GM12878 (cell line): ENCODE measurements at regions of chr3 and their contacts with region 1.

Region 1: GRCh38 chr3:149717391-149718056 is 34.8 kb downstream of the COMMD2 start:
- DNase-seq: no peak
- ATAC-seq: peak; percentile 87
- H3K4me3 ChIP-seq: no peak overlapping the region
- H3K27ac ChIP-seq: no peak overlapping the region
- H3K4me1 ChIP-seq: no peaks in the 10 kb centered on the region
- H3K27me3 ChIP-seq: no peaks in the 10 kb centered on the region
- CTCF ChIP-seq: peak; percentile 64 to 70 (median 66)
- EP300 ChIP-seq: no peak
- POLR2A ChIP-seq: no peak
- RAD21 ChIP-seq: peak; percentile 78

Region 2: GRCh38 chr3:149536429-149536828 is 181.1 kb before region 1 on chr3:
- CTCF ChIA-PET with region 1: interaction called, 150 read pairs
- POLR2A ChIA-PET with region 1: no interaction called
- RAD21 ChIA-PET with region 1: interaction called, 44 read pairs
- SMC1A ChIA-PET with region 1: interaction called, 67 read pairs
- in situ Hi-C with region 1: no loop called
- intact Hi-C with region 1: loop called (anchors 1 kb)
- DNase-seq: no peak
- ATAC-seq: no peak
- H3K4me3 ChIP-seq: no peak overlapping the region
- H3K27ac ChIP-seq: no peak overlapping the region
- H3K4me1 ChIP-seq: peaks cover 12% of the 10 kb centered on the region
- H3K27me3 ChIP-seq: no peaks in the 10 kb centered on the region
- CTCF ChIP-seq: no peak
- EP300 ChIP-seq: no peak
- POLR2A ChIP-seq: no peak
- RAD21 ChIP-seq: no peak

Region 3: GRCh38 chr3:149581681-149582370 is 135.7 kb before region 1 on chr3:
- CTCF ChIA-PET with region 1: interaction called, 22 read pairs
- POLR2A ChIA-PET with region 1: no interaction called
- RAD21 ChIA-PET with region 1: interaction called, 9 read pairs
- SMC1A ChIA-PET with region 1: interaction called, 33 read pairs
- in situ Hi-C with region 1: no loop called
- intact Hi-C with region 1: no loop called
- DNase-seq: no peak
- ATAC-seq: peak; percentile 57
- H3K4me3 ChIP-seq: peak overlapping the region; percentile 52; the same call in 1 of the 2 replicates
- H3K27ac ChIP-seq: peak overlapping the region; percentile 63
- H3K4me1 ChIP-seq: peaks cover 73% of the 10 kb centered on the region
- H3K27me3 ChIP-seq: no peaks in the 10 kb centered on the region
- CTCF ChIP-seq: no peak
- EP300 ChIP-seq: 0 out of 4 replicates have a peak, but pooled peaks of 1 of the 2 experiments have one; percentile 21
- POLR2A ChIP-seq: no peak
- RAD21 ChIP-seq: no peak

Region 4: GRCh38 chr3:149657926-149658733 is 59.4 kb before region 1 on chr3 and contains the start of gene WWTR1:
- CTCF ChIA-PET with region 1: interaction called, 39 read pairs
- POLR2A ChIA-PET with region 1: interaction called, 7 read pairs
- RAD21 ChIA-PET with region 1: interaction called, 18 read pairs
- SMC1A ChIA-PET with region 1: interaction called, 30 read pairs
- in situ Hi-C with region 1: no loop called
- intact Hi-C with region 1: loop called (anchors 2 kb)
- DNase-seq: peak; percentile 54
- ATAC-seq: peak; percentile 85
- H3K4me3 ChIP-seq: peak within 1 kb of the TSS; percentile 87
- H3K27ac ChIP-seq: peak within 1 kb of the TSS; percentile 97
- H3K4me1 ChIP-seq: peaks cover 10% of the 10 kb centered on the region
- H3K27me3 ChIP-seq: no peaks in the 10 kb centered on the region
- CTCF ChIP-seq: peak; percentile 23 to 52 (median 43); a peak in 5 of 6 replicates
- EP300 ChIP-seq: 0 out of 4 replicates have a peak, but pooled peaks of 1 of the 2 experiments have one; percentile 18
- POLR2A ChIP-seq: peak; percentile 77
- RAD21 ChIP-seq: peak; percentile 54
- polyA plus RNA-seq, gene WWTR1: 3.8 to 4.0 TPM

Region 5: DNA sequence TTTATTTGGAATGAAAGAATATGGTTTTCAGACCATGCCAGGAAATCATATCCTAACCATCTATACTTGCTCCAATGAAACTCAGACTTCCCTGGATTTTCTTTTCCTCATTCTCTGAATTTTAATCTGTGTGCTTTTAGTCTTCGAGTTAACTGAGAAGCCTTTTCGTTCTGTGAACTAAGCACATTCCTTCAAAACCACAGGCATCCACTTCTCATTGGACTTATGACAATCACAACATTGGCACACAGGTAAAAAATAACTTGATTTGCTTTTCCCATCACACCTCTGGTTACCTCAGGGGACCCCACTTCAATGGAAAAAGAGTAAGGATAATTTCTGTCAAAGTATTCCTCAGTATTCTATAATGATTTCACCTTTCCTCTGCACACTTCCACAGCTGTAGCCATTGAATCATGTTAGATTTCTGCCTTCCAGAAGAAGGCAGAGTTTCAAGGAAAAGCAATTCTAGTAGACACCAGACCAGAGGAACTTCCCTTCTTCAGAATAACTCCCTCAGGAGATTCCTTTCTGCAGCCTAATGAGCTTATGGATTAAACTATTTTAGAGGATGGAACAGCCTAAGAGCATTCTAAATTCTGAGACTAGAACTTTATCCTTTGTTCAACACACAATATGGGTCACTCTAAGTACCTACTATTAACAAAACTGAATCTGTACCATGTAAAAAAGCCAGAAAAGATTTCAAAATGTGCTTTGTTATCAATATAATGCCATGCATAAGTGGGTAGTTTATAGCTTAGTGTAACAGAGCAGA is 18.8 kb after region 1 on chr3:
- CTCF ChIA-PET with region 1: interaction called, 11 read pairs
- POLR2A ChIA-PET with region 1: no interaction called
- RAD21 ChIA-PET with region 1: no interaction called
- SMC1A ChIA-PET with region 1: interaction called, 6 read pairs
- in situ Hi-C with region 1: no loop called
- intact Hi-C with region 1: no loop called
- DNase-seq: no peak
- ATAC-seq: no peak
- H3K4me3 ChIP-seq: no peak overlapping the region
- H3K27ac ChIP-seq: no peak overlapping the region
- H3K4me1 ChIP-seq: no peaks in the 10 kb centered on the region
- H3K27me3 ChIP-seq: no peaks in the 10 kb centered on the region
- CTCF ChIP-seq: no peak
- EP300 ChIP-seq: no peak
- POLR2A ChIP-seq: no peak
- RAD21 ChIP-seq: no peak

Region 6: GRCh38 chr3:150984066-150984465 is 1266.5 kb after region 1 on chr3:
- CTCF ChIA-PET with region 1: no interaction called
- POLR2A ChIA-PET with region 1: no interaction called
- RAD21 ChIA-PET with region 1: no interaction called
- SMC1A ChIA-PET with region 1: no interaction called
- in situ Hi-C with region 1: no loop called
- intact Hi-C with region 1: no loop called
- DNase-seq: no peak
- ATAC-seq: no peak
- H3K4me3 ChIP-seq: no peak overlapping the region
- H3K27ac ChIP-seq: no peak overlapping the region
- H3K4me1 ChIP-seq: no peaks in the 10 kb centered on the region
- H3K27me3 ChIP-seq: no peaks in the 10 kb centered on the region; a peak in 1 of 4 replicates
- CTCF ChIP-seq: no peak
- EP300 ChIP-seq: no peak
- POLR2A ChIP-seq: no peak
- RAD21 ChIP-seq: no peak